Transverse colon (tissue), 4 donors: ENCODE measurements at regions of chr20 and their contacts with region 1.

Region 1: GRCh38 chr20:57654363-57654997 is 34.3 kb upstream of the ZBP1 start:
- DNase-seq: peak; percentile 65
- H3K4me3 ChIP-seq: no peak overlapping the region
- H3K27ac ChIP-seq: no peak overlapping the region
- H3K4me1 ChIP-seq: peaks cover 3 to 9% (median 7%) of the 10 kb centered on the region in 4 donors
- H3K27me3 ChIP-seq: no peaks in the 10 kb centered on the region
- CTCF ChIP-seq: peak; percentile 90 to 95 (median 92)
- EP300 ChIP-seq: no peak
- POLR2A ChIP-seq: no peak

Region 2: DNA sequence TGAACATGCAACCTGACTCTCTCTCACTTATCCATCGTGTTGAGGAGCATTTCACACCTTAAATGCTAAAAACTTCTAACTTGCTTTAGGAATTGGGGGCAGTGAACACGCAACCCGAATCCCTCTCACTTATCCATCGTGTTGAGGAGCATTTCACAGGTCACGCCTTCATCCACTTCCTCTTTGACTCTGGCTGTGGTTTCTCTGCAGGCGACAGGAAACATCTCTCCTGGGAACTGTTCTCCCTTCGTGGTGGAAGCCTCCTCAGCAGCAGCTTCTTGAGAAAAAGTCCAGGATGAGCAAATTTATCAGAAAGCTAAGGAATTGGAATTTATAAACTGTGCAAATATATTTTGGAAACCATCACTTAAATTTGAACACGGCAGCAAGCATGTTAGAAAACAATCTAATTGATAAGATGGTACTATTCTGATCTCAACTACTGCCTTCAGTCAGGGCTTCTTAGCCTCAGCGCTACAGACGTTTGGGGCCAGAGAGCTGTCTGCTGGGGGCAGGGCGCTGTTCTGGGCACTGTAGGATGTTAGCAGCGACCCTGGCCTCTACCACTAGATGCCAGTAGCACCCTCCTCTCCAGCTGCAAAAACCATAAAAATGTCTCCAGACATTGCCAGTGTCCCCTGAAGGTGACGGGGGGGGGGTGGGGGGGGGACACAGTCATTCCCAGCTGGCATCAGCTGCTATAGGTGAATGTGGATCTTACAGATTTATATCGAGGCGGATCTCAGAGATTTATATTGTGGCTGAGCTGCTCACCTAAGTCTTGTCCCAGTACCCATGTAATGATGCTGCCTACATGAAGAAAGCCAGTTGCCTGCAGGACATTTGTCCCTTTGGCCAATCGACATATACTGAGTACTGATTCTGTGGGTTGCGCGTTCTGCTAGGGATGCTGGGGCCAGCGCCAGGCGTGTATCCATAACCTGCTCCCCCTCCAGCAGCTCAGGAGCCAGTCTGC is 155.8 kb before region 1 on chr20:
- in situ Hi-C with region 1: no loop called
- intact Hi-C with region 1: no loop called
- DNase-seq: no peak
- H3K4me3 ChIP-seq: no peak overlapping the region
- H3K27ac ChIP-seq: no peak overlapping the region
- H3K4me1 ChIP-seq: peaks cover 0 to 15% (median 7%) of the 10 kb centered on the region in 4 donors
- H3K27me3 ChIP-seq: no peaks in the 10 kb centered on the region
- CTCF ChIP-seq: peak in 2 of 5 experiments; percentile 18 to 31
- EP300 ChIP-seq: no peak
- POLR2A ChIP-seq: no peak

Region 3: DNA sequence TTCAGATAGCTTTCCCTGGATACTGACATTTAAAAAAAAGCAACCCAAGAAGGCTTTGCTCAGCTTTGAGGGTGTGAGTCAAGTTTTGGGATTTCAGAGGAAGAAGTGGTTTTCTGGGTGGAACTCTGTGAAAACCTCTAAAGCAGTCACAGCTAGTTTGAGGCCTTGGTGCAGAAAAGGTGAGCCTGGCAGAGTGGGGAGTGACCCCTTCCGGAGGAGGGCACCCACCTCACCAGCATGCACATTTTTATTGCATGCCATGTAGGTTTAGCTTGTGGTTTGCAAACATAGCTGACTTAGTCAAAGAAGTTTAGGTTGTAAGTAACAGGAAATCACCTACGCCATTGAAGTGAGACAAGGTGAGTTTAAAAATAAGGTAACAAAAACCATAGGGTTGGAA is 202.2 kb after region 1 on chr20:
- in situ Hi-C with region 1: no loop called
- intact Hi-C with region 1: loop called (anchors 10 kb)
- DNase-seq: no peak
- H3K4me3 ChIP-seq: no peak overlapping the region
- H3K27ac ChIP-seq: no peak overlapping the region
- H3K4me1 ChIP-seq: no peaks in the 10 kb centered on the region
- H3K27me3 ChIP-seq: no peaks in the 10 kb centered on the region
- CTCF ChIP-seq: no peak
- EP300 ChIP-seq: no peak
- POLR2A ChIP-seq: no peak

Region 4: GRCh38 chr20:57879779-57880570 is 225.5 kb after region 1 on chr20:
- in situ Hi-C with region 1: loop called in 1 of 4 experiments (anchors 25 kb)
- intact Hi-C with region 1: no loop called
- DNase-seq: no peak
- H3K4me3 ChIP-seq: no peak overlapping the region
- H3K27ac ChIP-seq: peak overlapping the region; percentile 14 to 48 (median 32)
- H3K4me1 ChIP-seq: peaks cover 0 to 10% (median 0%) of the 10 kb centered on the region in 4 donors
- H3K27me3 ChIP-seq: no peaks in the 10 kb centered on the region
- CTCF ChIP-seq: no peak
- EP300 ChIP-seq: no peak
- POLR2A ChIP-seq: no peak

Region 5: GRCh38 chr20:58087193-58087858 is 432.8 kb after region 1 on chr20:
- in situ Hi-C with region 1: loop called in 3 of 4 experiments (anchors 10 to 25 kb)
- intact Hi-C with region 1: no loop called
- DNase-seq: peak; percentile 48
- H3K4me3 ChIP-seq: no peak overlapping the region
- H3K27ac ChIP-seq: no peak overlapping the region
- H3K4me1 ChIP-seq: no peaks in the 10 kb centered on the region
- H3K27me3 ChIP-seq: no peaks in the 10 kb centered on the region
- CTCF ChIP-seq: peak; percentile 77 to 89 (median 86)
- EP300 ChIP-seq: no peak
- POLR2A ChIP-seq: no peak

Region 6: DNA sequence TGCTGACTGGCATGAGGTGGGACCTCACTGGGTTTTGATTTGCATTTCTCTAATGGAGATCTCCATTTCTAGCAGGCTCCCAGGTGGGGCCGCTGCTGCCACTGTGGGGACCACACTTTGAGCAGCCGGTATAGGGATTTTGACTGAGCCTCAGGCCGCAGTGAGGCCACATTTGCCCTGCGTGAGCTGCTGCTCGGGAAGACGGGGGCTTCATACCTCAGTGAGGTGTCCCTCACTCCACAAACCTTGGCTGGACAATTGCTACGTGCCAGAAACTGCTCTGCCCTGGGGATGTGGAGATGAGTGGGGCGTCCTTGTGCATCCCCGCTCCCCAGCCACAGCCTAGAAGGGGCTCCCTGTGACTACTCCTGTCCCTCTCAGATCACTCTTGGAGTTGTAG is 439.7 kb after region 1 on chr20:
- in situ Hi-C with region 1: loop called in 3 of 4 experiments (anchors 10 to 25 kb)
- intact Hi-C with region 1: no loop called
- DNase-seq: no peak
- H3K4me3 ChIP-seq: no peak overlapping the region
- H3K27ac ChIP-seq: no peak overlapping the region
- H3K4me1 ChIP-seq: no peaks in the 10 kb centered on the region
- H3K27me3 ChIP-seq: no peaks in the 10 kb centered on the region
- CTCF ChIP-seq: no peak
- EP300 ChIP-seq: no peak
- POLR2A ChIP-seq: no peak

Region 7: DNA sequence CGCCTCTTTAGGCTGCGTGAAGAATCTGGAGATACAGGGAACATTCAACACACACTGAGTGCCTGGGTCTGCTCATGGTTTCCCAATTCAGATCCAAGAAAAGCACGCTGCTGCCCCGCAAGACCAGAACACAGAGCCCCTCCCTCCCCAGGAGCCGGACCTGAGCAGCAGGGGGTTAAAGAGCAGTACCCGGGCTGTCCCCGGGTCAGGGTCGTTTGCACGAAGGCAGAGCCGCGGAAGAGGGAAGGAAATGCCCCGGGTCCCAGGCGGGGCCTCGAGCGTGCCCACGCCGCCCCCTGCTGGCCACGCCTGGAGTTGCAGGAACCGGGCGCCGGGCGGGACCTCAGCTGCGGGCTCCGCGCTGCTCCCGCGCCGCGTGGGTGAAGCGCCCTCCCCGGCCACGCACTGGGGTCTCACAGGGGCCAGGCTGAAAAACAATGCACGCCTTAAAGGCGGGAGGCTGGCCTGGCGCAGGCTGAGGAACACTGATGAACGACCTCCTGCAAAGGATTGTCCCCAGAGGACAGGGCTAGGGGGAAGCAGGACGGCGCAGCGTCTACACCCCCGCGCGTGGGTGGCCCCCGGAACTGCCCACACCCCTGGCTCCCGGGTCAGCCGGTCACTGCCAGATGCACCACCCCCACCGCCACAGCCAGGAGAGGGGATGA is 525.1 kb after region 1 on chr20:
- in situ Hi-C with region 1: loop called in 3 of 4 experiments (anchors 5 to 10 kb)
- intact Hi-C with region 1: loop called (anchors 1 kb)
- DNase-seq: peak; percentile 59
- H3K4me3 ChIP-seq: peak overlapping the region in 2 of 4 donors; percentile 8 to 43
- H3K27ac ChIP-seq: no peak overlapping the region
- H3K4me1 ChIP-seq: peaks cover 0 to 14% (median 7%) of the 10 kb centered on the region in 4 donors
- H3K27me3 ChIP-seq: peaks cover 7% of the 10 kb centered on the region
- CTCF ChIP-seq: peak; percentile 81 to 100 (median 99)
- EP300 ChIP-seq: no peak
- POLR2A ChIP-seq: no peak